ENCODE measurements at regions of chr1 and their contacts with region 1.

Region 1: GRCh38 chr1:39816415-39817090 is 27.9 kb upstream of the BMP8B start:
- DNase-seq: peak; percentile 77
- H3K4me3 ChIP-seq: no peak overlapping the region
- H3K27ac ChIP-seq: peak overlapping the region in 1 of 2 donors; percentile 55
- H3K4me1 ChIP-seq: no peaks in the 10 kb centered on the region
- H3K27me3 ChIP-seq: no peaks in the 10 kb centered on the region
- CTCF ChIP-seq: peak; percentile 83 to 98 (median 94)
- POLR2A ChIP-seq: no peak

Region 2: DNA sequence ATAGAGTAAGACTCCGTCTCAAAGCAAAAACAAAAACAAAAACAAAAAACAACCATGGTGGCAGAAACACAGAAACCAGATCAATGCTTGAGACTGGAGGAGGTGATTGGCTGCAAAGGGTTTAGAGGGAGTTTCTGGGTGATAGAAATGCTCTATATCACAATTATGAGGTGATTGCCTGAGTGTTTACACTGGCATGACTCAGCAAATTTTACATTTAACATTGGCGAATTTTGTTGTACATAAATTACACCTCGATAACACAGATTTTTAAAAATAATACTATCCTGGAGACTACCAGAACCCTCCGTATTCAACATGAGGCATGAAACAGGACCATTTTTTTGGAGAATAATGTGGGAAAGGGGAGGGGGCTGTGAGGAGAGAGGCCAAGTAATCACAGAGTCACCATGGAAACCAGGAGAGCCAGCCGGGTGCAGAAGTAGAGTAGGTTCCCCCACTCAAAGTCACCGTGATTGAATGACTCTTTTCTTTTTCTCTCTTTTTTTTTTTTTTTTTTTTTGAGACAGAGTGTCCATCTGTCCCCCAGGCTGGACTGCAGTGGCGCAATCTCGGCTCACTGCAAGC is 201.4 kb before region 1 on chr1:
- intact Hi-C with region 1: no loop called
- DNase-seq: no peak
- H3K4me3 ChIP-seq: no peak overlapping the region
- H3K27ac ChIP-seq: no peak overlapping the region
- H3K4me1 ChIP-seq: no peaks in the 10 kb centered on the region
- H3K27me3 ChIP-seq: no peaks in the 10 kb centered on the region
- CTCF ChIP-seq: no peak
- POLR2A ChIP-seq: no peak

Region 3: GRCh38 chr1:39894884-39895495 is 78.4 kb after region 1 on chr1:
- intact Hi-C with region 1: loop called (anchors 2 kb)
- DNase-seq: peak; percentile 40
- H3K4me3 ChIP-seq: no peak overlapping the region
- H3K27ac ChIP-seq: peak overlapping the region; percentile 16 to 47
- H3K4me1 ChIP-seq: no peaks in the 10 kb centered on the region
- H3K27me3 ChIP-seq: no peaks in the 10 kb centered on the region
- CTCF ChIP-seq: no peak
- POLR2A ChIP-seq: no peak

Region 4: DNA sequence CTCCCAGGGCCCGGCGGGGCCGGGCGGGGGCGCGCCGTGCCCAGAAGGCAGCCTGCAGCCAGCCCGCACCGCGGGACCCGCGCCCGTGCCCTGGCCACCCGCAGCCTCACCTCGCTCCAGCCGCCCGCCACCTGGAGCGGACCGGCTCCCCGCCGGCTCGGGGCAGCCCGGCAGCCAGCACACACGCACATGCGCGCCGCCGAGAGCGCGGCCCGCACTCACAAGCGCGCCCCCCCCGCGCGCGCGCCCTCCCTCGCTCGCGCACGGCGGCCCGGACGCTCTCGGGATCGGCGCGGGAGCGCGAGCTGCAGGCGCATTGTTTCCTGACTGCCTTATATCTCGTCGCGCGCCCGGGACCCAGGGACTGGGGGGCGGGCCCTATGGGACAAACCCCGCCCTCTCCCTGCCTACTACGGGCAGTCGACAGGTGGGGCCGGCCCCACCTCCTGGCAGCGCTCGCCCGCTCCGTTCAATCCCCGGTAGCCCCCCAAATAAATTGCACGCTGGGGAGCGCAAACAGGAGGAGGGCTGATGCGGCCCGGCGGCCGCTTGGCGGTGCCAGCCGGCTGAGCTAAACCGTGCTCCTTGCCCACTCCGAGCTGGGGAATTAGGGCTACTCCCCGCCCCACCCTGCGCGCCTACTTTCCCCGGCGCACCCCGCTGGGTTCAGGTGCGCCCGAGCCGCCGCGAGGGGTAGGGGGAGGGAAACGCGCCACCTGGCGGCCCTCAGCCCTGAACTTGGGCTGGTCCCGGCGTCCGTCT is 85.3 kb after region 1 on chr1 and contains the start of gene MYCL:
- intact Hi-C with region 1: loop called (anchors 2 kb)
- DNase-seq: peak; percentile 94
- H3K4me3 ChIP-seq: peak within 1 kb of the TSS; percentile 61 to 81
- H3K27ac ChIP-seq: peak within 1 kb of the TSS; percentile 66 to 82
- H3K4me1 ChIP-seq: no peaks in the 10 kb centered on the region
- H3K27me3 ChIP-seq: no peaks in the 10 kb centered on the region
- CTCF ChIP-seq: peak; percentile 84 to 92 (median 91)
- POLR2A ChIP-seq: peak; percentile 76
- total RNA-seq, gene MYCL: 14.5 to 19.7 TPM

Region 5: GRCh38 chr1:39973503-39974135 is 157.1 kb after region 1 on chr1:
- intact Hi-C with region 1: loop called (anchors 1 kb)
- DNase-seq: peak; percentile 76
- H3K4me3 ChIP-seq: no peak overlapping the region
- H3K27ac ChIP-seq: no peak overlapping the region
- H3K4me1 ChIP-seq: no peaks in the 10 kb centered on the region
- H3K27me3 ChIP-seq: no peaks in the 10 kb centered on the region
- CTCF ChIP-seq: peak; percentile 80 to 98 (median 96)
- POLR2A ChIP-seq: no peak